Endothelial cell of umbilical vein (primary cell): ENCODE measurements at regions of chr18 and their contacts with region 1.

Region 1: GRCh38 chr18:75209129-75209950 is at the start of gene PTGR3:
- DNase-seq: peak; percentile 89
- H3K4me3 ChIP-seq: peak within 1 kb of the TSS; percentile 73 to 97 (median 83)
- H3K27ac ChIP-seq: peak within 1 kb of the TSS; percentile 88
- H3K4me1 ChIP-seq: peaks cover 46% of the 10 kb centered on the region
- H3K27me3 ChIP-seq: no peaks in the 10 kb centered on the region
- CTCF ChIP-seq: no peak
- POLR2A ChIP-seq: no peak
- total RNA-seq, gene PTGR3: 18.3 and 21.9 TPM in 2 replicates

Region 2: GRCh38 chr18:73966954-73967353 is 1242.4 kb before region 1 on chr18:
- CTCF ChIA-PET with region 1: no interaction called
- POLR2A ChIA-PET with region 1: no interaction called
- dilution Hi-C with region 1: no loop called
- intact Hi-C with region 1: no loop called
- DNase-seq: no peak
- H3K4me3 ChIP-seq: no peak overlapping the region
- H3K27ac ChIP-seq: no peak overlapping the region
- H3K4me1 ChIP-seq: no peaks in the 10 kb centered on the region
- H3K27me3 ChIP-seq: no peaks in the 10 kb centered on the region
- CTCF ChIP-seq: no peak
- POLR2A ChIP-seq: no peak

Region 3: DNA sequence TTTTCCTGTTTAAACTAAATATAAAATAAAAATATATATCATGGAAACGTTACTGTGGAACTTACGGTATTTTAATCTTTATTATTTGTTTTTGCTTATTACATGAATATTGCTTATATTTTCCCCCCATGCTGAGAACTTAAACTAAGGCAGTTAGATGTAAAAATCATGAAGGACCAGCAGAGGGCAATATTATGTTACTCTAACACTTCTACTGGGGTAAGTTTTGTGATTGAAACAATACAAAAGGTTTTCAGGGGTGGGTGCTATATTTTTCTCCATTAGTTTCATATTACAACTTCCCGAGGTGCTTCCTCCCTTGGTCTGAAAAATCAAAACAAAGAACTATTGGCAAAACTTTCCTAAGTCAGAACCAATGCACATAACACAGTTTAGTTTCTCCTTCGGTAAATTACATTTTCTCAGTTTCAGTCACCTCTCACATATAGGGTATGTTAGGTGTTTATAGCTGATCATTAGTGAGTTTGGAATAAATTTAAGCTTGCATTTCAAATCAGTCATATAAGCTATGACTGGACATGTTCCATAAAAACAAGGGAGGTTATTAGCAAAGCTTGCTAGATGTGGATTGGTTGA is 556.9 kb before region 1 on chr18:
- CTCF ChIA-PET with region 1: interaction called, 5 read pairs
- POLR2A ChIA-PET with region 1: no interaction called
- dilution Hi-C with region 1: no loop called
- intact Hi-C with region 1: loop called (anchors 2 kb)
- DNase-seq: peak; percentile 81
- H3K4me3 ChIP-seq: no peak overlapping the region
- H3K27ac ChIP-seq: peak overlapping the region; percentile 32
- H3K4me1 ChIP-seq: peaks cover 5% of the 10 kb centered on the region
- H3K27me3 ChIP-seq: no peaks in the 10 kb centered on the region
- CTCF ChIP-seq: peak; percentile 21 to 28
- POLR2A ChIP-seq: no peak

Region 4: DNA sequence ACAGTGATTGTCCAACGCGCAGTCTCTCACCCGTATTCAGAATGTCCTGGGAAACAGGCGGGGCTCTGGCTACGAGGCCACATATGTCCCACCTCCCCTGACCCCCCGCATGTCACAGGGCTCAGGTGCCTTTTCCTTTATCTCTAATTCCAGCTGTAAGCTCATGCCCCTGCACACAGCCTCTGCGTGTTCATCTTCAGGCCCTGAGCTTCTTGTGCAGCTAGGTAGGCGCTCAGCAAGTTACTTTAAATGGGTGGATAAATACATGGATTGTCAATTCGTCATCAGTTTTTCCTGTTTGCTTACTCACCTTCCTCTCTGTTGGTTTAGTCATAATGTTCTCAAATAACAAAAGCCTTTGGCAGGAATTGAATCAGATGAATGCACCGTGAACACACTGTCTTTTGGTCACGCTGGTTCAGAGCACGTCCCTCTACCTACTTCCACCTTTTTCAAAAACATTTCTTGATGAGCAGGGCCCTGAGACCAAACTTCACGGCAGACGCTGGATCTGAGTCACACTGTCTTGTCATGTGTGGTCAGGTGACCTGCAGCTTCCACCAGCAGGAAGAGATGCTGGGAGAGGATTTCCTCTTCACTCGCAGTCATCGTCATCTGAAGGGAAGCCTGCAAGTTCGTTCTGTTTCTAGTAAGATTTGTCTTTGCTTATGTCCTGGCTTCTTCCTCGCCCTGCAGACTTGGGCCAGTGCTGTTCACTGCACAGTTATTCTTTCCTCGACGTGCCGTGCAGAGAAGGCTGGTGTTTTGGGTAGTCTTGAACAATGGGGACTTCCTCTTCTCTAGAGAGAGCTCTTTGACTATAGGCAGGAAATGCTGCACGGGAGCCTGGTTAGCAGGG is 138.5 kb before region 1 on chr18:
- CTCF ChIA-PET with region 1: interaction called, 3 read pairs
- POLR2A ChIA-PET with region 1: no interaction called
- dilution Hi-C with region 1: no loop called
- intact Hi-C with region 1: loop called (anchors 1 kb)
- DNase-seq: peak; percentile 94
- H3K4me3 ChIP-seq: peak overlapping the region in 1 of 3 experiments; percentile 45
- H3K27ac ChIP-seq: peak overlapping the region; percentile 99
- H3K4me1 ChIP-seq: peaks cover 44% of the 10 kb centered on the region
- H3K27me3 ChIP-seq: no peaks in the 10 kb centered on the region
- CTCF ChIP-seq: no peak
- POLR2A ChIP-seq: peak; percentile 68

Region 5: DNA sequence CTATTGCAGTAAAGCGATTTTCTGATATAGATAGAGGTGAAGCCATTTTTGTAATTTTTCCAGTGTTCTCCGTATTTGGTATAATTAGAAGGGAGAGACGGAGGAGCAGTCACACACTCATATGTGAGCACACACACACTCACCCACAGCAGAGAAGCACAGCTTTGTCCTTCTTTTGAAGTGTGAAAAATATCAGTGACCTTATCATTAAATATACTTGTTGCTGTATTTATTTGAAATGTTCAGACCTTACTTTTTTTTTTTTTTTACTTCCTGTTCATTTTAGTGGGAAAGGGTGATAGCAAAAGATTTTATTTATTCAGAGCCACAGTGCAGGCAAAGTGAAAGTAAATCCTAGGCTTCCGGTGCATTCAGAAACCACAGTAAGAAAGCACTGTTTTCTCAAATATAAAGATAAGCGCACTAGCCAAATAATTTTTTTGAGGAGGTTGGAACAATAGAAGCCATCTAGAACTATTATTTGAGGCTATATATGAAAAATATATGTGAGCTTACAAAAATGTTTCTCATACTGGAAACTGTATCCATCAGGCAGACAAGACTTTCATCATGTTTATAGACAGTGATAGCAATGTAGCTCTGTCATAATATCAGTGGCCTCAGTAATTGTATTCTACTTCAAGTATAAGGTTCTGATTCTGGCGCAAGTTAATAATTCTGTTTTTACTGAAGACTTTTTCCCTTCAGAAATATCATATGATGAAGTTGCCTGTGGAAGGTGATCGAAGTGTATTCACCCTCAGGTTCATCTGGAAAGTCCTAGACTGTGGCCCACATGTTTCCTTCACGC is 38.5 kb after region 1 on chr18:
- CTCF ChIA-PET with region 1: interaction called, 4 read pairs
- POLR2A ChIA-PET with region 1: interaction called, 3 read pairs
- dilution Hi-C with region 1: no loop called
- intact Hi-C with region 1: loop called (anchors 1 kb)
- DNase-seq: peak; percentile 86
- H3K4me3 ChIP-seq: peak overlapping the region; percentile 8 to 79 (median 61)
- H3K27ac ChIP-seq: peak overlapping the region; percentile 78
- H3K4me1 ChIP-seq: peaks cover 27% of the 10 kb centered on the region
- H3K27me3 ChIP-seq: no peaks in the 10 kb centered on the region
- CTCF ChIP-seq: no peak
- POLR2A ChIP-seq: no peak

Region 6: GRCh38 chr18:75455249-75456198 is 246.2 kb after region 1 on chr18:
- CTCF ChIA-PET with region 1: no interaction called
- POLR2A ChIA-PET with region 1: no interaction called
- dilution Hi-C with region 1: no loop called
- intact Hi-C with region 1: loop called (anchors 5 kb)
- DNase-seq: peak; percentile 6
- H3K4me3 ChIP-seq: peak overlapping the region; percentile 13 to 56 (median 25)
- H3K27ac ChIP-seq: no peak overlapping the region
- H3K4me1 ChIP-seq: peaks cover 3% of the 10 kb centered on the region
- H3K27me3 ChIP-seq: peaks cover 1 to 4% of the 10 kb centered on the region in 2 experiments
- CTCF ChIP-seq: no peak
- POLR2A ChIP-seq: no peak